ENCODE measurements at regions of chr15 and their contacts with region 1.

Region 1: GRCh38 chr15:39944726-39945125 is 10.8 kb downstream of the EIF2AK4 start:
- DNase-seq: no peak
- ATAC-seq: no peak
- H3K4me3 ChIP-seq: no peak overlapping the region
- H3K27ac ChIP-seq: no peak overlapping the region
- H3K4me1 ChIP-seq: peaks cover 0 to 9% (median under 1%) of the 10 kb centered on the region in 12 donors
- H3K27me3 ChIP-seq: no peaks in the 10 kb centered on the region
- CTCF ChIP-seq: no peak
- POLR2A ChIP-seq: no peak

Region 2: GRCh38 chr15:39997031-39997430 is 52.3 kb after region 1 on chr15:
- intact Hi-C with region 1: loop called in 1 of 10 experiments (anchors 10 kb)
- DNase-seq: no peak
- ATAC-seq: no peak
- H3K4me3 ChIP-seq: no peak overlapping the region
- H3K27ac ChIP-seq: no peak overlapping the region
- H3K4me1 ChIP-seq: no peaks in the 10 kb centered on the region
- H3K27me3 ChIP-seq: no peaks in the 10 kb centered on the region
- CTCF ChIP-seq: no peak
- POLR2A ChIP-seq: no peak

Region 3: GRCh38 chr15:40010686-40011085 is 66.0 kb after region 1 on chr15:
- intact Hi-C with region 1: loop called in 1 of 10 experiments (anchors 5 kb)
- DNase-seq: no peak
- ATAC-seq: no peak
- H3K4me3 ChIP-seq: no peak overlapping the region
- H3K27ac ChIP-seq: no peak overlapping the region
- H3K4me1 ChIP-seq: no peaks in the 10 kb centered on the region
- H3K27me3 ChIP-seq: no peaks in the 10 kb centered on the region
- CTCF ChIP-seq: no peak
- POLR2A ChIP-seq: no peak

Measured in heart left ventricle (tissue), 16 donors.